Left lung (tissue), 14 donors: ENCODE measurements at regions of chrX and their contacts with region 1.

Region 1: DNA sequence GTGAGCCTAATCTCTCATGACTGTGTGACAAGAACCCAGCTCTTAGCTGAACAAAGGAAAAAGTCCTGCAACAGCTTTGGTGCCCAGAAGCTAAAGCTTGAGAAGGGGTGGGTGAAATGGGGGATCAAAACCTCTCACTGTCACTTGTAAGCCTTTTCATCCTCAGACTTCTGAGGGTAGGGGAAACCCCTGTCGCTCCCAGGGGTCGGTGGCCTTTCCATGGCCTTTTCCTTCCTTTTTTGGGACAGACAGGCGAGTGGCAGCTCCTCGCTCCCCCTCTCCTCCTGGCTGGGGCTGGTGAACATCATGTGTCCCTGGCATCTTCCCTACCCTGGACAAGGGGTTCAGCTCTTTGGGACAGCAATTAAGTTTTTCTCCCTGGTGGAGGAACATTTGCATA is 78.2 kb downstream of the FAM47A start:
- DNase-seq: no peak
- ATAC-seq: no peak
- H3K4me3 ChIP-seq: no peak overlapping the region
- H3K27ac ChIP-seq: no peak overlapping the region
- H3K4me1 ChIP-seq: no peaks in the 10 kb centered on the region
- H3K27me3 ChIP-seq: no peaks in the 10 kb centered on the region
- CTCF ChIP-seq: no peak

Region 2: DNA sequence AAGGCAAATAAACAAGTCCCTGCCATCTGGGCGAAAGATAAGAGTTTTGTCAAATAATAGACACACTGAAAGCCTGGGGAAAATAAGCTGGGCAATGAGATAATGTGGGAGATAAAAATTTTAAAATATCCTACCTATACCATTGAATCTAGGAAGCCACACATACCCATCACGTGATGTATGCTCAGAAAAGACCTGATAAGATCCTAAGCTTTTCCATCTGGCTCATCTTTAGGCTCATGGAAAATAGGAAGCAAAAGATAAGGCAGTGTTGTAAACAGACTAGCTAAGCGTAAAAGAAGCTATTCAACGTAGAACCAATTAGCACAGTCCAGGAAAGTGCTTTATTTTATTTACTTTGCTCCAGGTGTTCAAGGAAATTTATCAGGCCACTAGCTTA is 25.4 kb before region 1 on chrX:
- intact Hi-C with region 1: loop called in 1 of 2 experiments (anchors 2 kb)
- DNase-seq: no peak
- ATAC-seq: no peak
- H3K4me3 ChIP-seq: no peak overlapping the region
- H3K27ac ChIP-seq: no peak overlapping the region
- H3K4me1 ChIP-seq: no peaks in the 10 kb centered on the region
- H3K27me3 ChIP-seq: no peaks in the 10 kb centered on the region
- CTCF ChIP-seq: no peak